ENCODE measurements at regions of chr11 and their contacts with region 1.

Region 1: DNA sequence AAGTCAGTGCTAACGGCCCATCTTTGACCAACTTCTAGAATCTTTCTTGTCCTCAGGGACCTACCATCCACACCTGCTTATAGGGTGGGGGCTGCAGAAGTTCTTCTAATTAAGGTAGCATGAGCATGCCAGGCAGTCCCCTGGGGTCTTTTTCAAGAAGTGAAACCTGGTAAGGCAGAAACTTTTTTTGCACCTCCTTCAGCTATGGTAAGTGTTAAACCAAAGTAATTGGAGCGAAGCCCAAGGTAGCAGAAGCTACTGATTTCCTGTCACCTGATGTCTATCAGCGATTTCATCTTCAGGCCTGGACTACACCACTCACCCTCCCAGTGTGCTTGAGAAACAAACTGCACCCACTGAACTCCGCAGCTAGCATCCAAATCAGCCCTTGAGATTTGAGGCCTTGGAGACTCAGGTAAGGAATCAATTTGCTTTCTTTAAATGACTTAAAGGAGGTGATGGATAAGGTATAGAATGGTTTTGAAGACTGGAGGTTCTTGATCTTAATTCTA is at the start of gene MS4A1:
- DNase-seq: peak; percentile 44
- ATAC-seq: peak; percentile 83
- H3K4me3 Mint-ChIP-seq: peak within 1 kb of the TSS; percentile 97
- H3K27ac Mint-ChIP-seq: peak within 1 kb of the TSS; percentile 97
- H3K4me1 Mint-ChIP-seq: peaks cover 54% of the 10 kb centered on the region
- H3K27me3 Mint-ChIP-seq: no peaks in the 10 kb centered on the region
- CTCF ChIP-seq: no peak
- total RNA-seq, gene MS4A1: 1,910 and 2,024 TPM in 2 replicates

Region 2: DNA sequence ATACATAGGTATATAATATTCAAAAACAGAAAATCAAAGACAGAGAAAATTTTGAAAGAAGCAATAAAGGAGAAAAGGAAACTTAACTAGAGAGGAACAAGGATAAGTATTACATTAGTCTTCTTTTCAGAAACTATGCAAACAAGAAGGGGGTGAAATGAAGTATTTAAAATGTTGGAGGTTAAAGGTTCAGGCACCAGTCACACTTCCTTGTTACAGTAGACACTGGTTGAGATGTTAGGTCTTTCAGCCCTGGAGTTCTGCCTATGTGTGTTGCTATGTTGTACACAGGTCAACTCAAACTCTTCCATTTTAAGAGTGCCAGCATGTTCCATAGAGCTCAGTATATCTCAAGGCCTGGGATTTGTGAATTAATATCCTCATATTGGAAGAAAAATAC is 181.2 kb before region 1 on chr11:
- CTCF ChIA-PET with region 1: no interaction called
- POLR2A ChIA-PET with region 1: no interaction called
- intact Hi-C with region 1: no loop called
- DNase-seq: no peak
- ATAC-seq: no peak
- H3K4me3 Mint-ChIP-seq: no peak overlapping the region
- H3K27ac Mint-ChIP-seq: no peak overlapping the region
- H3K4me1 Mint-ChIP-seq: peaks cover 11% of the 10 kb centered on the region
- H3K27me3 Mint-ChIP-seq: no peaks in the 10 kb centered on the region
- CTCF ChIP-seq: no peak

Region 3: GRCh38 chr11:60345489-60345888 is 110.1 kb before region 1 on chr11:
- CTCF ChIA-PET with region 1: interaction called, 8 read pairs
- POLR2A ChIA-PET with region 1: interaction called, 13 read pairs
- intact Hi-C with region 1: no loop called
- DNase-seq: no peak
- ATAC-seq: peak; percentile 56
- H3K4me3 Mint-ChIP-seq: no peak overlapping the region
- H3K27ac Mint-ChIP-seq: no peak overlapping the region
- H3K4me1 Mint-ChIP-seq: peaks cover 35% of the 10 kb centered on the region
- H3K27me3 Mint-ChIP-seq: no peaks in the 10 kb centered on the region
- CTCF ChIP-seq: no peak

Region 4: DNA sequence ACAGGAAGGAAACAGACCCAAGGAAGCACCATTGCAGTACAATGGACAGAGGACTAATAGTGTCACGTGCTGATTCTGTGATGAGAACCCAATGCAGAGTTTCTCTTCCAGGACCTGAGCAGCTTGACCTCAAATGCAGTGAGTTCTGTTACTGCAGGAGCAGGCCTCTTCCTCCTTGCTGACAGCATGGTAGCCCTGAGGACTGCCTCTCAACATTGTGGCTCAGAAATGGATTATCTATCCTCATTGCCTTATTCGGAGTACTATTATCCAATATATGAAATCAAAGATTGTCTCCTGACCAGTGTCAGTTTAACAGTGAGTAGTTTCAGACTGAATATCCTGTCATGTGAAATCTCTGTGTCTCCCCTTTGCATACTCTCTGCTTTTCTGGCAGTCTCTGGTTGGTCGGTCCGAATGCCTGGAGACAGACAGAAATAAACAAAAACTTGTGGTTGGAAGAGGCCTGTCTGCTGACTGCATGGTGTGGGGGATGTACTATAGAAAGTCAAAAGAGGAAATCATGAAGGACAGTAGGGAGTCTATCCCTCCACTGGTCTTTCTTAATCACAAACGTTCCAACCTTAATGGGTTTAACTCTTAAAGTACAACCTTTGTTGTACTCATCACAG is 66.2 kb before region 1 on chr11:
- CTCF ChIA-PET with region 1: interaction called, 3 read pairs
- POLR2A ChIA-PET with region 1: interaction called, 179 read pairs
- intact Hi-C with region 1: loop called (anchors 1 kb)
- DNase-seq: no peak
- ATAC-seq: peak; percentile 92
- H3K4me3 Mint-ChIP-seq: peak overlapping the region; percentile 58
- H3K27ac Mint-ChIP-seq: peak overlapping the region; percentile 88
- H3K4me1 Mint-ChIP-seq: peaks cover 49% of the 10 kb centered on the region
- H3K27me3 Mint-ChIP-seq: no peaks in the 10 kb centered on the region
- CTCF ChIP-seq: no peak

Region 5: DNA sequence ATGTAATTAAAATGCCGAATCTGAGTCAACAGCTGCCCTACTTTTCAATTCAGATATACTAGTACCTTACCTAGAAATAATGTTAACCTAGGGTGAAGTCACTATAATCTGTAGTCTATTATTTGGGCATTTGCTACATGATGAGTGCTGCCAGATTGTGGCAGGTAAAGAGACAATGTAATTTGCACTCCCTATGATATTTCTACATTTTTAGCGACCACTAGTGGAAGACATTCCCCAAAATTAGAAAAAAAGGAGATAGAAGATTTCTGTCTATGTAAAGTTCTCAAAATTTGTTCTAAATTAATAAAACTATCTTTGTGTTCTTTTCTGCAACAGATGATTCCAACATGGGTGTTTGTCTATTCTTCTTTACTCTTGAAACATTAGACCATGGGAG is 14.1 kb after region 1 on chr11:
- CTCF ChIA-PET with region 1: interaction called, 10 read pairs
- POLR2A ChIA-PET with region 1: interaction called, 68 read pairs
- intact Hi-C with region 1: loop called (anchors 1 kb)
- DNase-seq: no peak
- ATAC-seq: no peak
- H3K4me3 Mint-ChIP-seq: no peak overlapping the region
- H3K27ac Mint-ChIP-seq: peak overlapping the region; percentile 37
- H3K4me1 Mint-ChIP-seq: peaks cover 71% of the 10 kb centered on the region
- H3K27me3 Mint-ChIP-seq: no peaks in the 10 kb centered on the region
- CTCF ChIP-seq: no peak

Region 6: GRCh38 chr11:60570970-60571369 is 115.4 kb after region 1 on chr11:
- CTCF ChIA-PET with region 1: no interaction called
- POLR2A ChIA-PET with region 1: no interaction called
- intact Hi-C with region 1: loop called (anchors 1 kb)
- DNase-seq: no peak
- ATAC-seq: peak; percentile 96
- H3K4me3 Mint-ChIP-seq: peak overlapping the region; percentile 7
- H3K27ac Mint-ChIP-seq: peak overlapping the region; percentile 56
- H3K4me1 Mint-ChIP-seq: peaks cover 30% of the 10 kb centered on the region
- H3K27me3 Mint-ChIP-seq: peaks cover 3% of the 10 kb centered on the region
- CTCF ChIP-seq: no peak

Region 7: DNA sequence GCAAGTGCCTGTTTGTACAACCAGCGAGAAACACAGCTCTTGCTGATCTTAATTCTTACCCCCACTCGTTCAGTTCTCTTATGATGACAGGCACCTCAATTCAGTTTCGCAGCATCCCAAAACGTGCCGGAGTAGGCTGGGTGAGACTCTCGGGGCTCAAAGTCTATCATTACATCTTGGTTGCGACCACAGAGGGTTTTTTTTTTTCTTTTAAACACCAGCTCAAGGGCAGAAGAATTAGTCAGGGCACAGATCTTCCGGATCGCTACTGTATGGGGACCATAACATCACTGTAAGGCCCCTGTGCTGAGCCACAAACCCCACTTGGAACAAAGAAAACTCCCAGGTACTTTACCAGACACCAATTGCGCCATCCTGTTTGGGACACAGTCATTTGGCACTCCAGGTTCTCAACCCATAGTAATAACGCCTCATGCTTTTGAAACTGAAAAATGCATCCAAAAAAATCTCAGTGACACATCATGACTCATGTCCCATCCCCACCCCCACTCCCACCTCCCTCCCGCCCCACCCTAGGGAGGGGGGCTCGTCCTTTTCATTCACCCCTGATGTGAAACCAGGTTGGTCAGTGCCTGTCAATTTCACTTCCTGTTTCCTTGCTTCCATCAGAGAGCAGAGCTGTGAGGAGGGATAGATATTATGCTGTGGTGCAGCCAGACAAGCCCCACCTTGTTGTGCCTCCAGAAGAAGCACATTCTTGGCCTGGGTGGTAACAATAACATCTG is 605.7 kb after region 1 on chr11:
- CTCF ChIA-PET with region 1: no interaction called
- POLR2A ChIA-PET with region 1: no interaction called
- intact Hi-C with region 1: loop called (anchors 10 kb)
- DNase-seq: peak; percentile 45
- ATAC-seq: peak; percentile 88
- H3K4me3 Mint-ChIP-seq: peak overlapping the region; percentile 75
- H3K27ac Mint-ChIP-seq: peak overlapping the region; percentile 95
- H3K4me1 Mint-ChIP-seq: peaks cover 40% of the 10 kb centered on the region
- H3K27me3 Mint-ChIP-seq: no peaks in the 10 kb centered on the region
- CTCF ChIP-seq: no peak